ENCODE measurements at regions of chr10 and their contacts with region 1.

Region 1: DNA sequence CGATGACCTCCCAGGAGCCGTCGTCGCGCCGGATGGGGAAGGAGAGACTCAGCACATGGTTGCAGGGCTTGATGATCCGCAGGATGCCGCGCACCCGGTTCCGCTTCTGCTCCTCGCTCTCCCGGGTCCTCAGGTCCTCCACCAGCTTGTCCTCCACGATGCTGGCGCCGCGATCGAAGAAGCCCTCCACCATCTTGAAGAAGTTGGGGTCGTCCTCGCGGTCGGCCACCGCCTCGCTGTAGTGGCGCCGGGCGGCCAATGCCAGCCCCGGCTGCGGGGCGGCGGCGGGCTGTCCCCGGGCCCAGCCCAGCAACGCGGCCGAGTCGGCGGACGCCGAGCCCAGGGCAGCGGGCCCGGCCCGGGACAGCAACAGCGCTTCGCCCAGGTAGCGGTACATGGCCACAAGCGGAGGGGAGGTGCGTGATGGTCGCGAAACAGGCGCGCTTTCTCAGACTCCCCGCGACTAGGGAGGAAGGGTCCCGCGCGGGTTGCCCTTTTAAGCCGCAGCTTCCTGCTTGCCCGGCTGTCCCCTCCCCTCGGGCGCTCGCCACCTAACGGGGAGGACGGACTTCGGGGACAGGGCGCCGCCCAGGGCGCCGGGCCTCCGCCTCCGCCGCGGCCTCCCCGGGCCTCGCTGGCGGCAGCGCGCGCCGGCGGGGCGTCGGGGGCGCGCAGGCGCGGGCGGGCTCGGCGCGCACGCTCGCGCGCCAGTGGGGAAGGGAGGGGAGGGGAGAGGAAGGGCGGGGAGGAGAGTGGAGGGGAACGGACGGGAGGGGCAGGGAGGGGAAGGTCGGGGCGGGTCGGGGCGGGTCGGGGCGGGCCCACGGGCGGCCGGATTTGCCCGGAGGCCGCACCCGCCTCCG is at the starts of genes GLUD1 and SHLD2:
- DNase-seq: peak; percentile 86 to 90 (median 88)
- H3K4me3 ChIP-seq: peak within 1 kb of the TSS; percentile 58 to 63
- H3K4me3 Mint-ChIP-seq: peak within 1 kb of the TSS; percentile 91 to 97 (median 94)
- H3K27ac ChIP-seq: peak within 1 kb of the TSS; percentile 86
- H3K27ac Mint-ChIP-seq: peak within 1 kb of the TSS; percentile 93 to 99 (median 95)
- H3K4me1 ChIP-seq: peaks cover 51% of the 10 kb centered on the region
- H3K4me1 Mint-ChIP-seq: peaks cover 41 to 60% (median 50%) of the 10 kb centered on the region in 4 donors
- H3K27me3 ChIP-seq: no peaks in the 10 kb centered on the region
- H3K27me3 Mint-ChIP-seq: no peaks in the 10 kb centered on the region
- total RNA-seq, gene GLUD1: 75.8 to 83.8 TPM
- total RNA-seq, gene SHLD2: 24.0 to 26.5 TPM

Region 2: DNA sequence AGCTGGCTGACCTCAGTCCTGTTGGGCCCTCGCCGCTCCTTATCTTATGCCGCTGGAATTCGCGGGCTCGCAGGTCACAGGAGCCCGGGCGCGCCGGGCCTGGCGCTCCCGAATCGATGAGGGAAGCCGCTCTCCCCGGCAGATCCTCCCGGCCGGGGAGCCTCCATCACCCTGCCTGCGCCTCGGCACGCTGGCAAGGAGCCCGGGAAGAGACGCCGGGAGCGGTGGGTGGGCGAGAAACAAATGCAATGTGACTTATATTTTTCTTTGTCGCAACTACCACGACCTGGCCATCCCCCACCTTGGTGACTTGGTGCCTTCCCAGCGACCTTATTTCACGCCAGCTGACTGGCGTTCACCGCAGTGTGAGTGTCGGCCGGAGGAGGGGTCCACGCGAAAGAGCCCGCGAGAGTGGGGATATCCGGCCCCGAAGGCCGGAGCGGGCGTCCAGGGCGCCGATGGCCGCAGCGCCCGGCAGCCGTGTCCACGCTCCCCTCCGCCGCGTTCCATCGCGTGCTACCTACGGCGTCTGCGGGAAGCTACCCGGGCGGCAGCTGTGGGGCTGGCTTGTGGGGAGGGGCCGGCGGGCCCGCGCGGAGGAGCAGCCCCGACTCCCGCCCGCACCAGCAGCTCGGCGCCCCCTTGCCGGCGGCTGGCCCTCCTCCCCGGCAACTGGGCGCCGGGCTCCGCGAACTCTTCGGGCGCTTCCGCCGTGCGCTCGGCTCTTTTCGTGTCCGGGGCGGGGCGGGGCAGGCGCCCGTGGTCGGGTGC is 338.7 kb before region 1 on chr10:
- CTCF ChIA-PET with region 1: no interaction called
- POLR2A ChIA-PET with region 1: interaction called, 5 read pairs
- intact Hi-C with region 1: loop called (anchors 2 kb)
- DNase-seq: peak; percentile 79 to 90 (median 87)
- H3K4me3 ChIP-seq: peak overlapping the region in 1 of 2 donors; percentile 68
- H3K4me3 Mint-ChIP-seq: peak overlapping the region; percentile 85 to 92 (median 90)
- H3K27ac ChIP-seq: peak overlapping the region; percentile 66
- H3K27ac Mint-ChIP-seq: peak overlapping the region in 6 of 7 donors; percentile 73 to 90 (median 86)
- H3K4me1 ChIP-seq: peaks cover 24% of the 10 kb centered on the region
- H3K4me1 Mint-ChIP-seq: peaks cover 25 to 42% (median 33%) of the 10 kb centered on the region in 4 donors
- H3K27me3 ChIP-seq: no peaks in the 10 kb centered on the region
- H3K27me3 Mint-ChIP-seq: no peaks in the 10 kb centered on the region

Region 3: DNA sequence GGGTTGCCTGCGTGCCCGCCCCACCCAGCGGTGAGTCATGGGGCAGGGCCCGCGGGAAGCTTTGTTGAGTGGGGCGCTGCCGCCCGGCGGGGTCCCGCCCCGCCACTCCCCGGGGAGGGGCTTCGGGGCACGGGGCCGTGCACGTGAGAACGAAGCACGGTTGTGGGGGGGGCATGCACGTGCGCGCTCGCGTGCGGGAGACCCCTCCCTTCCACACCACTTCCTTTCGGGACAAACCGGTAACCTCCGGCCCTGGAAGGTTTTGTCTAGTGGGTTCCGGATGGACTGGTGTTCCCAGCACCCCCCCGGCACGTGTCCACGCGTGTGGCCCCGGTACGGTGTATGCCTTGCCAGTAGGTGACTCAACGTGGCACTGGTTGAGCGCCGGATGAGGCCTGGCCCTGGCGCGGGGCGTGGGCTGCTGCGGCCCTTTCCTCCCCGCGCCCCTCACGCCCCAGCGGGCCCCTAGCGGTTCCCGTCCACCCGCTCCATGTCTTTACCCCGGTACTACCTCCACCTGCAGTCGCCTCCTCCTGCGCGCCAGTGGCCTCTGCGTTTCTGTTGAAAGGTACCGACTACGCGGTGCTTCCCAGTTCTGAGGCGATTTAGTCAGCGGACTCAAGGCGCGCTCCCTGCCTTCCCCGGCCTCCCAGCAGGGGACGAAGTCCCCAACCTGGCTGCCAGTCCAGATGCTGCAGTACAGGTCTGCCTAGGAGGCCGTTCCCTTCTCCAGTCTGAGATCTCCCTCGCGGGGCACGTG is 123.2 kb before region 1 on chr10:
- CTCF ChIA-PET with region 1: interaction called, 3 read pairs
- POLR2A ChIA-PET with region 1: interaction called, 26 read pairs
- intact Hi-C with region 1: loop called (anchors 1 kb)
- DNase-seq: peak; percentile 92 to 96 (median 93)
- H3K4me3 ChIP-seq: peak overlapping the region; percentile 3 to 68
- H3K4me3 Mint-ChIP-seq: peak overlapping the region; percentile 81 to 88 (median 84)
- H3K27ac ChIP-seq: peak overlapping the region; percentile 76
- H3K27ac Mint-ChIP-seq: peak overlapping the region; percentile 90 to 96 (median 93)
- H3K4me1 ChIP-seq: peaks cover 44% of the 10 kb centered on the region
- H3K4me1 Mint-ChIP-seq: peaks cover 19 to 52% (median 31%) of the 10 kb centered on the region in 4 donors
- H3K27me3 ChIP-seq: no peaks in the 10 kb centered on the region
- H3K27me3 Mint-ChIP-seq: peaks cover 0 to 1% of the 10 kb centered on the region in 2 donors

Region 4: GRCh38 chr10:87079106-87079836 is 15.3 kb before region 1 on chr10:
- CTCF ChIA-PET with region 1: interaction called, 22 read pairs
- POLR2A ChIA-PET with region 1: interaction called, 34 read pairs
- intact Hi-C with region 1: loop called (anchors 1 kb)
- DNase-seq: no peak
- H3K4me3 ChIP-seq: no peak overlapping the region
- H3K4me3 Mint-ChIP-seq: no peak overlapping the region
- H3K27ac ChIP-seq: no peak overlapping the region
- H3K27ac Mint-ChIP-seq: peak overlapping the region in 2 of 7 donors; percentile 5 to 52
- H3K4me1 ChIP-seq: peaks cover 17% of the 10 kb centered on the region
- H3K4me1 Mint-ChIP-seq: peaks cover 20 to 36% (median 31%) of the 10 kb centered on the region in 4 donors
- H3K27me3 ChIP-seq: no peaks in the 10 kb centered on the region
- H3K27me3 Mint-ChIP-seq: no peaks in the 10 kb centered on the region

Measured in CD4-positive, alpha-beta memory T cell (primary cell).